ENCODE measurements at regions of chr20 and their contacts with region 1.

Region 1: GRCh38 chr20:25399037-25399430 is 8.4 kb upstream of the ABHD12 start:
- DNase-seq: peak in 4 of 5 donors; percentile 23 to 48 (median 42)
- H3K4me3 ChIP-seq: no peak overlapping the region
- H3K4me3 Mint-ChIP-seq: no peak overlapping the region
- H3K27ac ChIP-seq: no peak overlapping the region
- H3K27ac Mint-ChIP-seq: no peak overlapping the region
- H3K4me1 ChIP-seq: no peaks in the 10 kb centered on the region
- H3K4me1 Mint-ChIP-seq: no peaks in the 10 kb centered on the region
- H3K27me3 ChIP-seq: no peaks in the 10 kb centered on the region
- H3K27me3 Mint-ChIP-seq: no peaks in the 10 kb centered on the region

Region 2: GRCh38 chr20:25294459-25295385 is 104.3 kb before region 1 on chr20:
- CTCF ChIA-PET with region 1: interaction called, 52 read pairs
- POLR2A ChIA-PET with region 1: no interaction called
- intact Hi-C with region 1: loop called (anchors 1 kb)
- DNase-seq: peak; percentile 33 to 44 (median 42)
- H3K4me3 ChIP-seq: no peak overlapping the region
- H3K4me3 Mint-ChIP-seq: no peak overlapping the region
- H3K27ac ChIP-seq: no peak overlapping the region
- H3K27ac Mint-ChIP-seq: peak overlapping the region in 4 of 7 donors; percentile 41 to 72 (median 55)
- H3K4me1 ChIP-seq: no peaks in the 10 kb centered on the region
- H3K4me1 Mint-ChIP-seq: peaks cover 0 to 4% (median 2%) of the 10 kb centered on the region in 4 donors
- H3K27me3 ChIP-seq: no peaks in the 10 kb centered on the region
- H3K27me3 Mint-ChIP-seq: no peaks in the 10 kb centered on the region

Region 3: GRCh38 chr20:25310268-25310920 is 88.6 kb before region 1 on chr20:
- CTCF ChIA-PET with region 1: interaction called, 17 read pairs
- POLR2A ChIA-PET with region 1: no interaction called
- intact Hi-C with region 1: loop called (anchors 1 kb)
- DNase-seq: peak; percentile 23 to 49 (median 31)
- H3K4me3 ChIP-seq: peak overlapping the region; percentile 13 to 46
- H3K4me3 Mint-ChIP-seq: peak overlapping the region; percentile 66 to 96 (median 83)
- H3K27ac ChIP-seq: peak overlapping the region; percentile 55
- H3K27ac Mint-ChIP-seq: peak overlapping the region; percentile 53 to 98 (median 93)
- H3K4me1 ChIP-seq: peaks cover 20% of the 10 kb centered on the region
- H3K4me1 Mint-ChIP-seq: peaks cover 13 to 41% (median 18%) of the 10 kb centered on the region in 4 donors
- H3K27me3 ChIP-seq: no peaks in the 10 kb centered on the region
- H3K27me3 Mint-ChIP-seq: no peaks in the 10 kb centered on the region

Region 4: DNA sequence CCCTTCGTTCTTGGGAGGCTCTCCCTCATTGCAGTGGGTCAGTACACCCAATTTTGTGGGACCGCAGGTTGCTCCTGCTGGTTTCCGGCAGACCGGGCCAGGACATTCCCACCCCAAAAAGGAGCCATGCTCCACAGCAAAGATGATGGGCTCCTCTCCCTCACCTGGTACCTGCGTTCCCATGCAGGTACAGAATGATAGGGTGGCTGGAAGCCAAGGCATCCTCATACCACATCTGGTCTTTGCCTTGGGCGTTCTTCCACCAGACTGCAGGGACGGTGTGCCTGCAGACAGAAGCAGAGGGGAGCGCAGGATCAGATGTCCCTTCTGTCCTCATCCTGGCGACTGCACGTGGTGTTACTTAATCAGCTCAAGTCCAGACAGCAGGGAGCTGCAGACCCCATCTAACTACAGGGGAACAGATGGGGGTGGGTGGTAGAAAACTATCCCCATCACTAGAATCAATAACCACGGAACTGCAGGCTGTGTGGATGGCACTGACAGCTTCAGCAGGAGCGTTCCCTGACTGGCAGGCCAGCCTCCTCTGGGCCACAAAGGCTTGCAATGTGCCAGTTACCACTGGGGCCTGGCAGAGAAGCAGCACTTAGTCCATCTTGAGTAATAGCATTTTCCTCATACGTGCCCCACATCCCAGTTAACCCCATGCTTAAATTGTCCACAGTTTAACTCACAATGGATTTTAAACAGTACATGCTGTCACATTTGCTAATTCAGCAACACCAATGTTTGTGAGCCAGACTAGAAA is 78.8 kb before region 1 on chr20:
- CTCF ChIA-PET with region 1: interaction called, 11 read pairs
- POLR2A ChIA-PET with region 1: no interaction called
- intact Hi-C with region 1: no loop called
- DNase-seq: no peak
- H3K4me3 ChIP-seq: no peak overlapping the region
- H3K4me3 Mint-ChIP-seq: no peak overlapping the region
- H3K27ac ChIP-seq: no peak overlapping the region
- H3K27ac Mint-ChIP-seq: peak overlapping the region in 1 of 7 donors; percentile 51
- H3K4me1 ChIP-seq: no peaks in the 10 kb centered on the region
- H3K4me1 Mint-ChIP-seq: peaks cover 5 to 9% (median 7%) of the 10 kb centered on the region in 4 donors
- H3K27me3 ChIP-seq: no peaks in the 10 kb centered on the region
- H3K27me3 Mint-ChIP-seq: no peaks in the 10 kb centered on the region